ENCODE measurements at regions of chr2 and their contacts with region 1.

Region 1: DNA sequence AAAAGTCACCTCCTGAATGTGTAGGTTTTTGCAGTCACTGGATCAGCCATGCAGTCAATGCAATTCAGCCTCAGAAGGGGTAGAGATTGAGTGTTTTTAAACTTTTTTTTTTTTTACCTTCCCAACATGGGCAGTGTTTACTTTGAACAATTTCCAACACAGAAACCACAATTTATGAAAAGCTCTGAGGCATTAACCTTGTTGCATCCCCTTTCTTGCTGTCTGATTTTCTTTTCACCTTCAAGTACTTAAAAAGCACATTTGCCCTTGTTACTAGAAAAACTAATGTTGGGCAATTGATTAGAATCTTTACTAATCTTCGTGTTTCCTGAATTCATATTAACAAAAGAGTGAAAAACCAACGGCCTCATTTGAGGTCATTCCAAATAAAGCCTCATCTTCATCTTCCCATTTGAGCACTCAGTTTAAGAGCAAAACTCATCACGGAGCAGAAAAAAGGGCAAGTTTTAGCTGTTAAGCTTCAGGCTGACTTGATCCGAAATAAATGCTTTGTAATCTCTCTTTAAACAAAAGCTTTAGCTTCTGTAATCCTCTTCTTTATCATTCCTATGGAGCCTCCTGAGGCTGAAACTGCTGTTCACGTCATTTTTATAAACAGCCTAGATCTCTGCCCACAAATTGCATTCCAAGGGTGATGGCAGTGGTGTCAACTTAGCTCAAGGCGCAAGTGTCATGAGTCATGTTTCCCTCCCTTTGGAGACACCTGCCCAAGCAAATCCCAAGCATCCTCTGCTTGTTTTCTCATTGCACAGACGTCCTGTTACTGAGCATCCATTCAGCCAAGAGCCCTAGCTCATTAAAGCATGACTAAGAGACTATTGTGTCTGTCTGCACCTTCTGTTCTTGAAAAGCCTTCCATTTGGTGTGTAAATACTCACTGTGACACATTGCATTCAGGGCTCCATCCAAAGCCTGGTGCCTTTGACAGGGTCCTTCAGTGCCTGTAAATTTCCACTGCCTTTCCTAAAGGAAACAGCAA is 107.7 kb downstream of the HNMT start:
- DNase-seq: peak; percentile 98
- H3K4me3 Mint-ChIP-seq: peak overlapping the region; percentile 56
- H3K27ac Mint-ChIP-seq: peak overlapping the region; percentile 39
- H3K4me1 Mint-ChIP-seq: peaks cover 6% of the 10 kb centered on the region
- H3K27me3 Mint-ChIP-seq: no peaks in the 10 kb centered on the region
- CTCF ChIP-seq: no peak

Region 2: DNA sequence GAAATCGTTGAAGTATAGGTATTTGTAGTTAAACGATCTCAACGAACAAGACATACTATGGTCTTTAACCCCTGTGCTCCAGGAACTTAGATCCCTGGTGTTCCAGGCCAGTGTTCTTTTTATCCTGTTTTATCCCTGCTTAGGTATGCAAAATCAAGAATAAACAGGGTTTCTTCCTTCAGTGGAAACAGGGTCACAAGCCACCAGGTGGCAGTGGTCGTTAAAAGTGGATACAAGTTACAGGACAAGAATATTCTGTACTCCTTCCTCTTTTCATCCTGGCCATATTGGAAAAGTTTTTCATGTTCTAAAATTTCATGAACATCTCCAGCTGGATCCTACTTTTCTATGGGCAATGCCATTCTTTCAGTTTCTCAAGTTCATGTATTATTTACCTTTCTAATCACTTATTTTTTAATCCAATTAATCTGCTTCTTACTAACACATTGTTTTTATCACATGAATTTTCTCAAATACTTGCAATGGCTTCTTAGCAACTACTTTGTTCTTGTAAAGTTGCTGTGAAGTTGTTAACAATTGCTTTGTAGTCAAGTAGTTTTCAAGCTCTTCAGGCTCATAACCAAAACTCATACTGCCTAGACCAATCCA is 124.2 kb before region 1 on chr2:
- CTCF ChIA-PET with region 1: no interaction called
- POLR2A ChIA-PET with region 1: no interaction called
- intact Hi-C with region 1: loop called (anchors 10 kb)
- DNase-seq: peak; percentile 72
- H3K4me3 Mint-ChIP-seq: no peak overlapping the region
- H3K27ac Mint-ChIP-seq: no peak overlapping the region
- H3K4me1 Mint-ChIP-seq: peaks cover 11% of the 10 kb centered on the region
- H3K27me3 Mint-ChIP-seq: no peaks in the 10 kb centered on the region
- CTCF ChIP-seq: peak; percentile 57

Region 3: GRCh38 chr2:138060301-138060635 is 11.8 kb before region 1 on chr2:
- CTCF ChIA-PET with region 1: no interaction called
- POLR2A ChIA-PET with region 1: interaction called, 10 read pairs
- intact Hi-C with region 1: no loop called
- DNase-seq: peak; percentile 95
- H3K4me3 Mint-ChIP-seq: no peak overlapping the region
- H3K27ac Mint-ChIP-seq: no peak overlapping the region
- H3K4me1 Mint-ChIP-seq: no peaks in the 10 kb centered on the region
- H3K27me3 Mint-ChIP-seq: no peaks in the 10 kb centered on the region
- CTCF ChIP-seq: no peak

Measured in MCF 10A (cell line).